IMR-90 (cell line): ENCODE measurements at regions of chr6 and their contacts with region 1.

Region 1: GRCh38 chr6:134174672-134175198 is 122.3 kb upstream of the SLC2A12 start:
- DNase-seq: peak; percentile 86
- ATAC-seq: peak; percentile 83
- H3K4me3 ChIP-seq: peak overlapping the region; percentile 62
- H3K27ac ChIP-seq: peak overlapping the region; percentile 76
- H3K4me1 ChIP-seq: peaks cover 11% of the 10 kb centered on the region
- H3K27me3 ChIP-seq: no peaks in the 10 kb centered on the region
- CTCF ChIP-seq: no peak
- POLR2A ChIP-seq: peak; percentile 100
- RAD21 ChIP-seq: no peak

Region 2: GRCh38 chr6:134295953-134296553 is 121.3 kb after region 1 on chr6:
- CTCF ChIA-PET with region 1: interaction called, 3 read pairs
- POLR2A ChIA-PET with region 1: no interaction called
- dilution Hi-C with region 1: no loop called
- in situ Hi-C with region 1: no loop called
- intact Hi-C with region 1: loop called (anchors 1 kb)
- DNase-seq: peak; percentile 100
- ATAC-seq: peak; percentile 95
- H3K4me3 ChIP-seq: no peak overlapping the region
- H3K27ac ChIP-seq: peak overlapping the region; percentile 96
- H3K4me1 ChIP-seq: peaks cover 14% of the 10 kb centered on the region
- H3K27me3 ChIP-seq: no peaks in the 10 kb centered on the region
- CTCF ChIP-seq: no peak
- POLR2A ChIP-seq: peak; percentile 40
- RAD21 ChIP-seq: peak; percentile 14

Region 3: GRCh38 chr6:134416418-134417154 is 241.9 kb after region 1 on chr6:
- CTCF ChIA-PET with region 1: no interaction called
- POLR2A ChIA-PET with region 1: interaction called, 3 read pairs
- dilution Hi-C with region 1: no loop called
- in situ Hi-C with region 1: loop called (anchors 10 kb)
- intact Hi-C with region 1: loop called (anchors 2 kb)
- DNase-seq: peak; percentile 61
- ATAC-seq: no peak
- H3K4me3 ChIP-seq: no peak overlapping the region
- H3K27ac ChIP-seq: no peak overlapping the region
- H3K4me1 ChIP-seq: peaks cover 15% of the 10 kb centered on the region
- H3K27me3 ChIP-seq: no peaks in the 10 kb centered on the region
- CTCF ChIP-seq: no peak
- POLR2A ChIP-seq: no peak
- RAD21 ChIP-seq: no peak

Region 4: GRCh38 chr6:134436281-134436815 is 261.6 kb after region 1 on chr6:
- CTCF ChIA-PET with region 1: no interaction called
- POLR2A ChIA-PET with region 1: no interaction called
- dilution Hi-C with region 1: no loop called
- in situ Hi-C with region 1: no loop called
- intact Hi-C with region 1: loop called (anchors 5 kb)
- DNase-seq: peak; percentile 99
- ATAC-seq: peak; percentile 98
- H3K4me3 ChIP-seq: no peak overlapping the region
- H3K27ac ChIP-seq: peak overlapping the region; percentile 83
- H3K4me1 ChIP-seq: peaks cover 7% of the 10 kb centered on the region
- H3K27me3 ChIP-seq: no peaks in the 10 kb centered on the region
- CTCF ChIP-seq: no peak
- POLR2A ChIP-seq: no peak
- RAD21 ChIP-seq: peak; percentile 23; the same call in 1 of the 2 replicates

Region 5: DNA sequence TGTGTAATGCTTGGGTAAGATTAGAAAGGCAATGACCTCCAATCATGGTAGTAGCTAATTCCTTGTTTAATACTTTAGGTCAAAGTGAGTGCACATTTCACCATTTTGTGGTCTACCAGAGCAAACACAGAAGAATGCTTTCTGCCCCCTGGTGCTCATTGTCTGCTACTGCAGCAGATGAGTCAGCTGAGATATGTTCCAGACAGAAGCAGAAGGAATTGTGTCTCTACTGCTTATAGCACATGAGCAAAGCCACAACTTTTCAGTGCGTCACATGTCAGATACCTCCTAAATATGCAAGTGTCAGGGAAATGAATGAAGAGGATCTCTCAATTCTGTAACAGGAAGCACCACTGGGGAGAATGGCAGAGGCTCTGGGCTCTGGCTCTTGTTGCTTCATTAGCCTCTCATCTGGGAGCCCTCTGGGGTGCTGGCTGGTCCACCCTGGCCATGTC is 466.3 kb after region 1 on chr6:
- CTCF ChIA-PET with region 1: interaction called, 4 read pairs
- POLR2A ChIA-PET with region 1: no interaction called
- dilution Hi-C with region 1: no loop called
- in situ Hi-C with region 1: loop called (anchors 5 kb)
- intact Hi-C with region 1: loop called (anchors 1 kb)
- DNase-seq: peak; percentile 95
- ATAC-seq: peak; percentile 89
- H3K4me3 ChIP-seq: no peak overlapping the region
- H3K27ac ChIP-seq: no peak overlapping the region
- H3K4me1 ChIP-seq: peaks cover 9% of the 10 kb centered on the region
- H3K27me3 ChIP-seq: no peaks in the 10 kb centered on the region
- CTCF ChIP-seq: peak; percentile 95
- POLR2A ChIP-seq: no peak
- RAD21 ChIP-seq: peak; percentile 93

Region 6: GRCh38 chr6:134822920-134823709 is 648.4 kb after region 1 on chr6:
- CTCF ChIA-PET with region 1: interaction called, 6 read pairs
- POLR2A ChIA-PET with region 1: interaction called, 3 read pairs
- dilution Hi-C with region 1: loop called (anchors 10 kb)
- in situ Hi-C with region 1: loop called (anchors 5 kb)
- intact Hi-C with region 1: loop called (anchors 1 kb)
- DNase-seq: peak; percentile 90
- ATAC-seq: peak; percentile 95
- H3K4me3 ChIP-seq: no peak overlapping the region
- H3K27ac ChIP-seq: peak overlapping the region; percentile 77
- H3K4me1 ChIP-seq: peaks cover 11% of the 10 kb centered on the region
- H3K27me3 ChIP-seq: no peaks in the 10 kb centered on the region
- CTCF ChIP-seq: peak; percentile 99
- POLR2A ChIP-seq: no peak; the same call in 1 of the 2 replicates
- RAD21 ChIP-seq: peak; percentile 100

Region 7: GRCh38 chr6:134938896-134939295 is 764.2 kb after region 1 on chr6:
- CTCF ChIA-PET with region 1: no interaction called
- POLR2A ChIA-PET with region 1: no interaction called
- dilution Hi-C with region 1: no loop called
- in situ Hi-C with region 1: no loop called
- intact Hi-C with region 1: loop called (anchors 1 kb)
- DNase-seq: peak; percentile 72
- ATAC-seq: no peak
- H3K4me3 ChIP-seq: no peak overlapping the region
- H3K27ac ChIP-seq: no peak overlapping the region
- H3K4me1 ChIP-seq: peaks cover 18% of the 10 kb centered on the region
- H3K27me3 ChIP-seq: no peaks in the 10 kb centered on the region
- CTCF ChIP-seq: no peak
- POLR2A ChIP-seq: no peak
- RAD21 ChIP-seq: no peak